ENCODE measurements at regions of chr7 and their contacts with region 1.

Region 1: GRCh38 chr7:3154912-3155494 is 111.3 kb upstream of the CARD11 start:
- H3K4me3 Mint-ChIP-seq: no peak overlapping the region
- H3K27ac Mint-ChIP-seq: no peak overlapping the region
- H3K4me1 Mint-ChIP-seq: peaks cover 13% of the 10 kb centered on the region
- H3K27me3 Mint-ChIP-seq: peaks cover 34% of the 10 kb centered on the region

Region 2: GRCh38 chr7:2863461-2864066 is 291.4 kb before region 1 on chr7:
- intact Hi-C with region 1: loop called (anchors 2 kb)
- H3K4me3 Mint-ChIP-seq: peak overlapping the region; percentile 74
- H3K27ac Mint-ChIP-seq: peak overlapping the region; percentile 98
- H3K4me1 Mint-ChIP-seq: peaks cover 29% of the 10 kb centered on the region
- H3K27me3 Mint-ChIP-seq: peaks cover 34% of the 10 kb centered on the region

Region 3: GRCh38 chr7:2886900-2887299 is 268.1 kb before region 1 on chr7:
- intact Hi-C with region 1: loop called (anchors 1 kb)
- H3K4me3 Mint-ChIP-seq: no peak overlapping the region
- H3K27ac Mint-ChIP-seq: no peak overlapping the region
- H3K4me1 Mint-ChIP-seq: peaks cover 6% of the 10 kb centered on the region
- H3K27me3 Mint-ChIP-seq: peaks cover 33% of the 10 kb centered on the region

Region 4: DNA sequence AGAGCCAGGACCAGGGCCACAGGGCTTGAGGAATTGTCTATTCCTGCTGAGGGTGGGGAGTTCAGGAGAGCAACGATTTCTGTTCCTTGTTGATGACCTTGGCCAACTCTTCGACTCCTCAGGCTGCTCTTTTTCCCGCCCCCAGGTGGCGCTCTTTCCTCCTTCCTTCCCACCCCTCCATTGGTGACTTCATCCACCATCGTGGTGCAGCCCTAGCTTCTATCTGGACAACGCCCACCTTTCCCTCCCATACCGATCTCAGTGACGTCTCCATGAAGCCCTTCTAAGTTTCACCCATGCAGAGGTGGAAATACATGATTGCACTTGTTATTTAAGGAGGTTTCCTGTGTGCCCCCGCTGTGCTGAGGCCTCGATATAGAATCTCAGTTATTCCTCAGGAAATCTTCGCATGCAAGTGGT is 89.3 kb before region 1 on chr7:
- intact Hi-C with region 1: loop called (anchors 2 kb)
- H3K4me3 Mint-ChIP-seq: no peak overlapping the region
- H3K27ac Mint-ChIP-seq: no peak overlapping the region
- H3K4me1 Mint-ChIP-seq: peaks cover 18% of the 10 kb centered on the region
- H3K27me3 Mint-ChIP-seq: peaks cover 18% of the 10 kb centered on the region

Region 5: GRCh38 chr7:3200504-3200903 is 45.5 kb after region 1 on chr7:
- intact Hi-C with region 1: no loop called
- H3K4me3 Mint-ChIP-seq: no peak overlapping the region
- H3K27ac Mint-ChIP-seq: no peak overlapping the region
- H3K4me1 Mint-ChIP-seq: peaks cover 5% of the 10 kb centered on the region
- H3K27me3 Mint-ChIP-seq: peaks cover 1% of the 10 kb centered on the region

Measured in dendritic cell treated with granulocyte-macrophage colony-stimulating factor and Interleukin-4, amounts not matched to agents 40 ng/mL and 50 ng/mL, for 4 days (primary cell).